ENCODE measurements at regions of chr1 and their contacts with region 1.

Region 1: DNA sequence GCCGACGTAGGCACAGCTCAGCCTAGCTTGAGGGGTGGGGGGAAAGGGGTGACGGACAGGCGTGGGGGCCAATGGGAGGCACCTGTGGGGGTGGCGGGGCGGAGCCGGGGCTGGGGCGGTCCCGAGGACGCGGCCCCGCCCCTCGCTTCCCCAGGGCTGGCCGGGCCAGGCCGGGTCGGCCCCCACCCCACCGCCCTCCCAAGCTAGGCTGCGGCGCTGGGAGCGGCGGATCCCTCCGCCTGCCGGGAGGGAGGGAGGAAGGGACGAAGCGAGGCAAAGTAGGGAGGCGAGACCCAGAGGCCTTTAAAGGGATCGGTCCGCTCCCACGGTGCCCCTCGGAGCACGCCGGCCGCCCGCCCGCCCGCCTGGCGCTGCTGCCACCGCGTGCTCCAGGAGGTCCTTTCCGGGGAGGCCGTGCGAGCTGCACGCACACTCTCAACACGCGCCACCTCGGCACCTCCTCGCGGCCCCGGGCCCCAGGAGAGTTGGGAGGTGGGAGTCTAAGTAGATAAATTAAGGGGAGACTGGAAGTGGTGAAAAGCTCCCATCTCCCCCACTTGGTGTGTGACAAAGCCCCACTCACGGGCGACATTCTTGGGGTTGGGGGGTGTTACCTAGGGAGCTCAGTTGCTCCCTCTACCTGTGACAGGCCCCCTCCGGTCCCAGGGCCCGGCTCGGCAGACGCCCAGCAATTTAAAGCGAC is 373 bp upstream of the MEF2D start:
- DNase-seq: peak; percentile 97
- ATAC-seq: peak; percentile 70
- H3K4me3 Mint-ChIP-seq: peak overlapping the region; percentile 89
- H3K27ac Mint-ChIP-seq: peak overlapping the region; percentile 94
- H3K4me1 Mint-ChIP-seq: peaks cover 61% of the 10 kb centered on the region
- H3K27me3 Mint-ChIP-seq: no peaks in the 10 kb centered on the region

Region 2: GRCh38 chr1:156456622-156457465 is 44.1 kb before region 1 on chr1:
- POLR2A ChIA-PET with region 1: interaction called, 17 read pairs
- DNase-seq: peak; percentile 89
- ATAC-seq: peak; percentile 87
- H3K4me3 Mint-ChIP-seq: peak overlapping the region; percentile 84
- H3K27ac Mint-ChIP-seq: peak overlapping the region; percentile 93
- H3K4me1 Mint-ChIP-seq: peaks cover 8% of the 10 kb centered on the region
- H3K27me3 Mint-ChIP-seq: peaks cover 10% of the 10 kb centered on the region

Region 3: GRCh38 chr1:156480411-156481192 is 20.3 kb before region 1 on chr1:
- POLR2A ChIA-PET with region 1: interaction called, 62 read pairs
- DNase-seq: peak; percentile 79
- ATAC-seq: peak; percentile 93
- H3K4me3 Mint-ChIP-seq: peak overlapping the region; percentile 21
- H3K27ac Mint-ChIP-seq: peak overlapping the region; percentile 82
- H3K4me1 Mint-ChIP-seq: peaks cover 31% of the 10 kb centered on the region
- H3K27me3 Mint-ChIP-seq: no peaks in the 10 kb centered on the region

Region 4: GRCh38 chr1:156489166-156489934 is 11.6 kb before region 1 on chr1:
- POLR2A ChIA-PET with region 1: interaction called, 81 read pairs
- DNase-seq: peak; percentile 57
- ATAC-seq: peak; percentile 53
- H3K4me3 Mint-ChIP-seq: peak overlapping the region; percentile 83
- H3K27ac Mint-ChIP-seq: peak overlapping the region; percentile 92
- H3K4me1 Mint-ChIP-seq: peaks cover 74% of the 10 kb centered on the region
- H3K27me3 Mint-ChIP-seq: no peaks in the 10 kb centered on the region

Region 5: DNA sequence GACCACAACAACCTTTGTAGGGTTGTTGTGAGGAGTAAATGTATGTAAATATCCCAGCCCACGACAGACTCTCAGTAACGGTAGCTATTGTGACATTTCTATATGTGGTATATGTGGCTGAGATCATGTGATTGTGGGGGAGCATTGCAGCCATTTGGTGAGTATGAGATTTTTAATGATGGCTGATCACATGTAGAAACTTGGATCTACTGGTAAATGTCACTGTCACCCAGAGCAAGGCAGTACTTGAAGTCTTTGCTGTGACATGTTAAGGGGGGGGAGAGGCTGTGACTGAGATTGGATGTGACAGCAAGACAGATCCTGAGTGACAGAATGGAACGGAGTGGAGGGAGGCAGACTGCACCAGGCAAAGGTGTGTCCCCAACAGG is 23.5 kb after region 1 on chr1:
- POLR2A ChIA-PET with region 1: interaction called, 61 read pairs
- DNase-seq: peak; percentile 42
- ATAC-seq: peak; percentile 72
- H3K4me3 Mint-ChIP-seq: peak overlapping the region; percentile 83
- H3K27ac Mint-ChIP-seq: peak overlapping the region; percentile 97
- H3K4me1 Mint-ChIP-seq: peaks cover 44% of the 10 kb centered on the region
- H3K27me3 Mint-ChIP-seq: no peaks in the 10 kb centered on the region

Region 6: DNA sequence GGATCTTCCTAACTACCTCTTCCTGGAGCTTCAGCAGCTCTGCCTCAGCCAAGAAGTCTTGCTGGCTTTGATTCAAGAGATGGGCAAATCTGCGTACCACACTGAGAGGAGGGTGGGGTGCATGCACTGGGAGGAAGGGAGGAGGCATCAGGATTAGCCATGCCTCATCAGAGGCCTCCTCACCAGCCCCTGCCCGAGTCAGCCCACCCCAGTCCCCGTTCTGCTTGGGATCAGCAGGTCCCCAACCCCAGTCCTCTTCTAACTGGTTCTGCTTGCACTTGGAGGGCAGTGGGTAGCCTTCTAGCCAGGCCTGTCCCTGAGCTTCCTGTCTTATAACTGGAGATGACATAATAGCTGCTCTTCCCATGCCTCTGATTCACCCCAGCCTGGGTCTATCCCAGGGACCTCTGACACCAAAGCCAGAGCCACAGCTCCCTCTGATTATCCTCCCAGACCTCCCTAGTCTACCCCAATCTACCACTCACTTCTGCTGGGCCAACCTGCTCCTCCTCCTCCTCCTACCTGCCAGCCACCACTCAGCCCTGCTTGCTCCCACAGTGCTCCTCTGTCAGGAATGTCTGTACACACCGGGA is 39.9 kb after region 1 on chr1:
- POLR2A ChIA-PET with region 1: no interaction called
- DNase-seq: peak; percentile 17
- ATAC-seq: no peak
- H3K4me3 Mint-ChIP-seq: no peak overlapping the region
- H3K27ac Mint-ChIP-seq: no peak overlapping the region
- H3K4me1 Mint-ChIP-seq: peaks cover 17% of the 10 kb centered on the region
- H3K27me3 Mint-ChIP-seq: no peaks in the 10 kb centered on the region

Region 7: GRCh38 chr1:156571949-156572662 is 71.2 kb after region 1 on chr1 and contains the start of gene IQGAP3:
- POLR2A ChIA-PET with region 1: interaction called, 18 read pairs
- DNase-seq: peak; percentile 79
- ATAC-seq: peak; percentile 92
- H3K4me3 Mint-ChIP-seq: peak within 1 kb of the TSS; percentile 97
- H3K27ac Mint-ChIP-seq: peak within 1 kb of the TSS; percentile 89
- H3K4me1 Mint-ChIP-seq: peaks cover 14% of the 10 kb centered on the region
- H3K27me3 Mint-ChIP-seq: peaks cover 15% of the 10 kb centered on the region
- total RNA-seq, gene IQGAP3: 26.1 to 30.3 TPM

Region 8: GRCh38 chr1:156581661-156582387 is 80.9 kb after region 1 on chr1:
- POLR2A ChIA-PET with region 1: interaction called, 43 read pairs
- DNase-seq: peak; percentile 70
- ATAC-seq: peak; percentile 84
- H3K4me3 Mint-ChIP-seq: peak overlapping the region; percentile 98
- H3K27ac Mint-ChIP-seq: peak overlapping the region; percentile 99
- H3K4me1 Mint-ChIP-seq: peaks cover 23% of the 10 kb centered on the region
- H3K27me3 Mint-ChIP-seq: no peaks in the 10 kb centered on the region